H1 (cell line): ENCODE measurements at regions of chr5 and their contacts with region 1.

Region 1: DNA sequence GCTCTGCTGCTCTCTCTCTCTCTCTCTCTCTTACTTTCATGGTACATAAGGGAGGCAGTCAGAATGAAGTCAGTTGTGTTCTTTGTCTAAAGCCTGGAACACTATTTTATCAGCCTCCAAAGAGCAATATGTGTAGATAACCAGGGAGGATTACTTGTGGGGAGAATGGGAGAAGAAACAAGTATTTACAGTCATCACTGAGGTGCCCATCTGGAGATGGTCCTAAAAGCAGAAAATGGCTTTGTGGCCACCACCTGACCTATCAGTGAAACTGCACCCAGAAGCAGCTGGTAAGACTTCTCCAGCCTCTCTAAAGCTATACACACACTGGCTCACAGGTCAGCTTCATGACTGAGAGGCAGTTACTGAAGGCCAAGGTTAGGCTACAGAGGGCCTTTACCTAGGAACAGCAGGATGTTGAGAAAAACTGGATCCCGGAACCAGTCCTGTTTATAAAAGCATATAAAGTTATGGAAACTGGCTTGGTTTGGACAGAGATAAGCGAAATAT is 75.1 kb downstream of the MRPS27 start:
- DNase-seq: no peak
- H3K4me3 ChIP-seq: no peak overlapping the region
- H3K27ac ChIP-seq: no peak overlapping the region
- H3K4me1 ChIP-seq: peaks cover 8 to 16% (median 12%) of the 10 kb centered on the region in 4 experiments
- H3K27me3 ChIP-seq: no peaks in the 10 kb centered on the region
- CTCF ChIP-seq: peak in 2 of 3 experiments; percentile 14 to 58; a peak in 2 of 4 replicates
- EP300 ChIP-seq: no peak
- POLR2A ChIP-seq: no peak
- RAD21 ChIP-seq: peak; percentile 51 to 65

Region 2: GRCh38 chr5:72121780-72122445 is 123.0 kb before region 1 on chr5:
- CTCF ChIA-PET with region 1: no interaction called
- POLR2A ChIA-PET with region 1: no interaction called
- DNase-seq: no peak
- H3K4me3 ChIP-seq: peak overlapping the region in 1 of 4 experiments; percentile 28; a peak in 1 of 8 replicates
- H3K27ac ChIP-seq: peak overlapping the region; percentile 40; the same call in 1 of the 2 replicates
- H3K4me1 ChIP-seq: peaks cover 11 to 24% (median 20%) of the 10 kb centered on the region in 4 experiments
- H3K27me3 ChIP-seq: no peaks in the 10 kb centered on the region
- CTCF ChIP-seq: no peak
- EP300 ChIP-seq: no peak
- POLR2A ChIP-seq: no peak
- RAD21 ChIP-seq: no peak

Region 3: DNA sequence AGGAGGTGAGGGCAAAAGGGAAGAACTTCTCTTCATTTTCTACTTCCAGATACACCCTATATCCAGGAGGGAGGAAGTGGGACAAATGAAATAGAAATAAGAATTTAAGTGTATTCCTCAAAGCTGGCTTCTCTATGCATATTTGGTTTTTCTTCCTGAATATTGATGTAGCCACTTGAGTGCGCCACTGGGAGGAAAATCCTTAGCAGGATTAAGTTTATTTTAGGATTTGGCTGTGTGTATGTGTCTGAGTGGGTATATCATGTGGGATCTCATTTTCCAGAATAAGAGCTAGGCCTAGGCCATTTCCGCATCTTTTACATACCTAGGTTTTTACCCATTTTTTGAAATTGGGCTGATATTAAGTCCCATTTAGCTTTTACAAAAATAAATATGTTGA is 95.2 kb before region 1 on chr5:
- CTCF ChIA-PET with region 1: no interaction called
- POLR2A ChIA-PET with region 1: no interaction called
- DNase-seq: no peak
- H3K4me3 ChIP-seq: no peak overlapping the region
- H3K27ac ChIP-seq: no peak overlapping the region
- H3K4me1 ChIP-seq: peaks cover 0 to 24% (median 17%) of the 10 kb centered on the region in 4 experiments; a peak in 5 of 7 replicates
- H3K27me3 ChIP-seq: no peaks in the 10 kb centered on the region
- CTCF ChIP-seq: no peak
- EP300 ChIP-seq: no peak
- POLR2A ChIP-seq: no peak
- RAD21 ChIP-seq: no peak

Region 4: DNA sequence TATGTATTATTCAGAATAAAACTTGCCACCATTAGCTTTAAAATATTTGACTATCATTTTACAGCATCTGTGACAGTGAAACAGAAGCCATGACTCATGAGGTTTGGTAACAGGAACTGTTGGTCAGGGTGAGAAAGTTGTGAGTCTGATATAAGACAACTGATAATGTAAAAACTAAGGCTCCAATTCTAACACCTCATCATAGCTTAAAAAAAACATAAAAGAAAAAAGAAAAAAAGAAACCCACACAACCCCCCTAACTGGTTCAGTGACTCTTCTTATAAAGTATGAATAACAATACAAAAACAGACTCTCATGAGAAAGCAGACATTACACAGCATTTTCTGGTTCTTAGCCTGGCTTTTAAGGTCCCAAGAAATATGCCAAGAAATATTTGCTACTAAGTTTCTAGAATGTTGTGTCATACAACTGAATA is 10.6 kb before region 1 on chr5:
- CTCF ChIA-PET with region 1: interaction called, 19 read pairs
- POLR2A ChIA-PET with region 1: no interaction called
- DNase-seq: no peak
- H3K4me3 ChIP-seq: no peak overlapping the region; a peak in 1 of 8 replicates
- H3K27ac ChIP-seq: no peak overlapping the region
- H3K4me1 ChIP-seq: peaks cover 0 to 19% (median 11%) of the 10 kb centered on the region in 4 experiments; a peak in 4 of 7 replicates
- H3K27me3 ChIP-seq: no peaks in the 10 kb centered on the region
- CTCF ChIP-seq: no peak
- EP300 ChIP-seq: no peak
- POLR2A ChIP-seq: no peak
- RAD21 ChIP-seq: no peak

Region 5: DNA sequence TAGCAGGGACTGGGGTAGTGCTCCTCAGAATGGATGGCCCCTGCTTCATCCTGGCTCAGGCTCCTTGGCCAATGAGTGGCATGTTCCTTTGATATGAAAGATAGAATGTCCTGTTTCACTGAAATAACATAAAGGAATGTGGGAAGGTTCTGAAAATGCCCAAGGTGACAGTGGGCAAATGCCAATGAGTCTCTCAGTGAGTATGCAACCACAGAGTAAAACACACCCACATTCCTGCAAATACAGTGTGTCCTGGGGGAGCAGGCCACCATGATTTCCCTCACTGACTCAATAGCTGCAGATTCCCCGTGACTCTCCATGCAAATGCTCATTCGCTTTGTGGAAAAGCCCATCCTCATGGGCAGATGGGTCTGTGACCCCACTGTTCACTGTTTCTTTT is 225.9 kb after region 1 on chr5:
- CTCF ChIA-PET with region 1: no interaction called
- POLR2A ChIA-PET with region 1: no interaction called
- DNase-seq: no peak
- H3K4me3 ChIP-seq: no peak overlapping the region
- H3K27ac ChIP-seq: no peak overlapping the region
- H3K4me1 ChIP-seq: no peaks in the 10 kb centered on the region
- H3K27me3 ChIP-seq: no peaks in the 10 kb centered on the region
- CTCF ChIP-seq: no peak
- EP300 ChIP-seq: no peak
- POLR2A ChIP-seq: no peak
- RAD21 ChIP-seq: no peak

Region 6: GRCh38 chr5:72673623-72674022 is 428.7 kb after region 1 on chr5:
- CTCF ChIA-PET with region 1: no interaction called
- POLR2A ChIA-PET with region 1: no interaction called
- DNase-seq: no peak
- H3K4me3 ChIP-seq: no peak overlapping the region
- H3K27ac ChIP-seq: no peak overlapping the region
- H3K4me1 ChIP-seq: no peaks in the 10 kb centered on the region
- H3K27me3 ChIP-seq: no peaks in the 10 kb centered on the region
- CTCF ChIP-seq: no peak
- EP300 ChIP-seq: no peak
- POLR2A ChIP-seq: no peak
- RAD21 ChIP-seq: no peak